Activated CD4-positive, alpha-beta T cell treated with anti-CD3 and anti-CD28 coated beads for 36 hours (primary cell): ENCODE measurements at regions of chr6 and their contacts with region 1.

Region 1: DNA sequence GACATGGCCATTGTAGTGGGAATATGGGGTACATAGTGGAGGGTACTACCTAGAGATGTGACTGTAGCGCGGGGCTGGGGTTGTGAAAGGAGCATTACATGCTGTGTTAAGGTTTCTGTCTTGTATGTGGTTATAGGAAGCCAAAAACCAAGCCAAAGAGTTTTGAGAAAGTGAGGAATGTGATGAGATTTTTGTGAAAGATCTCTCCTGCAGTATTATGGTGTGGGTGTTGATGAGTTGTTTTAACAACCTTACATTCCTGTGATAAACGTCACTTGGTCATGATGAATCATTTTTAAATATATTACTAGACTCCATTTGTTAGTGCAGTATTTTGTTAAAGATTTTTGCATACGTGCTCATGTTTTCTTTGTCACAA is 48.9 kb downstream of the ZFAND3 start:
- DNase-seq: peak; percentile 32
- ATAC-seq: peak; percentile 66
- H3K4me3 Mint-ChIP-seq: no peak overlapping the region
- H3K27ac Mint-ChIP-seq: peak overlapping the region; percentile 64
- H3K4me1 Mint-ChIP-seq: peaks cover 65% of the 10 kb centered on the region
- H3K27me3 Mint-ChIP-seq: no peaks in the 10 kb centered on the region

Region 2: GRCh38 chr6:37913210-37913609 is 44.8 kb after region 1 on chr6:
- CTCF ChIA-PET with region 1: no interaction called
- POLR2A ChIA-PET with region 1: no interaction called
- intact Hi-C with region 1: loop called in 1 of 2 experiments (anchors 2 kb)
- DNase-seq: no peak
- ATAC-seq: peak; percentile 81
- H3K4me3 Mint-ChIP-seq: no peak overlapping the region
- H3K27ac Mint-ChIP-seq: no peak overlapping the region
- H3K4me1 Mint-ChIP-seq: peaks cover 55% of the 10 kb centered on the region
- H3K27me3 Mint-ChIP-seq: no peaks in the 10 kb centered on the region

Region 3: GRCh38 chr6:37987018-37987417 is 118.6 kb after region 1 on chr6:
- CTCF ChIA-PET with region 1: no interaction called
- POLR2A ChIA-PET with region 1: no interaction called
- intact Hi-C with region 1: loop called in 1 of 2 experiments (anchors 2 kb)
- DNase-seq: peak; percentile 55
- ATAC-seq: peak; percentile 74
- H3K4me3 Mint-ChIP-seq: peak overlapping the region; percentile 7
- H3K27ac Mint-ChIP-seq: peak overlapping the region; percentile 29
- H3K4me1 Mint-ChIP-seq: peaks cover 71% of the 10 kb centered on the region
- H3K27me3 Mint-ChIP-seq: no peaks in the 10 kb centered on the region